Spleen (tissue), 13 donors: ENCODE measurements at regions of chr15 and their contacts with region 1.

Region 1: DNA sequence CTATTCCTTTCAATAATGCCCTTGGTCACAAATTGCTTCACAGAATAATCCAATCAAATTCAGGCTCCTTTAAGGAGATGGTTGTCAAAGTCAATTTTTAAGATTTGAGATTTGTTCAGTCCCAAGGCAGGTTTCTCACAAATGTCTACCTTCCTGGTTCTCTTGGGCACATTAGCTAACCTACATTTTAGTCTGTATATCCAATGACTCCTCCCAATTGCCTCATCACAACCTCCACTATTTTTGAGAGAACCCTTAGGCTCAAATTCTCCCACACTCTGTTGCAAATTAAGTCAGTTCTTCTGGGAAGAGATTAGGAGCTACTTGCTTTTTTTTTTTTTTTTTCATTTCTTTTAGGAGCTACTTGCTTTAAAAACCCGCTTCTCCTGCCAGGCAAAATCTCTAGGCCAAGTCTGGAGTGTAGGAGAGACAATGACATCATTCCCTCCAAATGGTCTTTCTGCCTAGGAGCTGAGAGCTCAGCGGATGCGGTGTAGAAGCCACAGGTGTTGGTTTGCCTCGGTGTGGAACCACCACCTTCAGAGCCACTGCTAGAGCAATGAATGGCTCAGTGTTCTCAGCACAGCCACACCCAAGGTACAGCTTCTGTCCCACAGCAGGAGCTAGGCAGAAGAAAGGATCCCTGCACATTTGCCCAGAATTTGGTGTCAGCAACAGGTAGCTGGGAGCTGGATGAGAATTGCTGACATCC is 10.0 kb upstream of the INO80 start:
- DNase-seq: no peak
- H3K4me3 ChIP-seq: no peak overlapping the region
- H3K27ac ChIP-seq: no peak overlapping the region
- H3K4me1 ChIP-seq: no peaks in the 10 kb centered on the region
- H3K27me3 ChIP-seq: peaks cover 0 to 6% (median 0%) of the 10 kb centered on the region in 7 donors
- CTCF ChIP-seq: no peak
- POLR2A ChIP-seq: no peak

Region 2: GRCh38 chr15:41230650-41231533 is 104.8 kb after region 1 on chr15 and contains the starts of genes CHP1 and EXD1:
- intact Hi-C with region 1: loop called (anchors 10 kb)
- DNase-seq: peak; percentile 99
- H3K4me3 ChIP-seq: peak within 1 kb of the TSS; percentile 54 to 86 (median 76)
- H3K27ac ChIP-seq: peak within 1 kb of the TSS; percentile 67 to 93 (median 90)
- H3K4me1 ChIP-seq: peaks cover 10 to 45% (median 26%) of the 10 kb centered on the region in 6 donors
- H3K27me3 ChIP-seq: no peaks in the 10 kb centered on the region
- CTCF ChIP-seq: peak; percentile 92 to 99 (median 97)
- POLR2A ChIP-seq: peak in 2 of 3 donors; percentile 2 to 83
- total RNA-seq, gene CHP1: 52.2 to 127 (median 60.0) TPM
- total RNA-seq, gene EXD1: not detected